Naive thymus-derived CD4-positive, alpha-beta T cell (primary cell): ENCODE measurements at regions of chr7 and their contacts with region 1.

Region 1: GRCh38 chr7:142478479-142479072 is 220.7 kb upstream of the PRSS58 start:
- DNase-seq: peak in 2 of 9 donors; percentile 27 to 32
- ATAC-seq: peak; percentile 62
- H3K4me3 ChIP-seq: no peak overlapping the region
- H3K4me3 Mint-ChIP-seq: peak overlapping the region in 9 of 10 donors; percentile 22 to 84 (median 71)
- H3K27ac ChIP-seq: peak overlapping the region; percentile 62
- H3K27ac Mint-ChIP-seq: peak overlapping the region; percentile 43 to 96 (median 90)
- H3K4me1 ChIP-seq: peaks cover 13 to 76% of the 10 kb centered on the region in 2 donors
- H3K4me1 Mint-ChIP-seq: peaks cover 48 to 94% (median 85%) of the 10 kb centered on the region in 7 donors
- H3K27me3 ChIP-seq: no peaks in the 10 kb centered on the region
- H3K27me3 Mint-ChIP-seq: no peaks in the 10 kb centered on the region

Region 2: DNA sequence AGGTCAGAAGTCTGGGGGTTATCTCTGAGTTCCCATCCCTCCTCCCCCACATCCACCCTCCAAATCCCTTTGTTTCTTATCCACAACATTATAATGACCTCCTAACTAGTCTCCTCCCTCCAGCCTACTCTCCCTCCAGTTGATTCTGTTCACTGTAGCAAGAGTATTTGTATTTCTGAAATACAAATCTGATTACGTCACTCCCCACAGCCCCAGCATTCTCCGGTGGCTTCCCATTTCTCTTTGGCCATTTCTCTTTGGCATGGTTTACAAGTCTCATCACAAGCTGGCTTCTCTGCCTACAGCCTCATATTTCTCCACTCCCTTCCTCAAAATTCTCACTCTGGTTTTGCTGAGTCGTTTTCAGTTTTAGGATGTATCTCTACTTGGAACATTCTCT is 1439.2 kb before region 1 on chr7:
- CTCF ChIA-PET with region 1: no interaction called
- POLR2A ChIA-PET with region 1: no interaction called
- intact Hi-C with region 1: no loop called
- DNase-seq: no peak
- ATAC-seq: no peak
- H3K4me3 ChIP-seq: no peak overlapping the region
- H3K4me3 Mint-ChIP-seq: no peak overlapping the region
- H3K27ac ChIP-seq: no peak overlapping the region
- H3K27ac Mint-ChIP-seq: no peak overlapping the region
- H3K4me1 ChIP-seq: no peaks in the 10 kb centered on the region
- H3K4me1 Mint-ChIP-seq: no peaks in the 10 kb centered on the region
- H3K27me3 ChIP-seq: peaks cover 0 to 2% of the 10 kb centered on the region in 2 donors
- H3K27me3 Mint-ChIP-seq: peaks cover 12 to 29% (median 18%) of the 10 kb centered on the region in 5 donors

Region 3: GRCh38 chr7:141975806-141976523 is 502.6 kb before region 1 on chr7:
- CTCF ChIA-PET with region 1: no interaction called
- POLR2A ChIA-PET with region 1: no interaction called
- intact Hi-C with region 1: loop called in 1 of 2 experiments (anchors 10 kb)
- DNase-seq: peak; percentile 31 to 72 (median 59)
- ATAC-seq: peak; percentile 84
- H3K4me3 ChIP-seq: peak overlapping the region; percentile 73
- H3K4me3 Mint-ChIP-seq: peak overlapping the region; percentile 57 to 88 (median 82)
- H3K27ac ChIP-seq: no peak overlapping the region
- H3K27ac Mint-ChIP-seq: peak overlapping the region in 8 of 9 donors; percentile 38 to 91 (median 76)
- H3K4me1 ChIP-seq: peaks cover 0 to 12% of the 10 kb centered on the region in 2 donors
- H3K4me1 Mint-ChIP-seq: peaks cover 6 to 29% (median 13%) of the 10 kb centered on the region in 7 donors
- H3K27me3 ChIP-seq: no peaks in the 10 kb centered on the region
- H3K27me3 Mint-ChIP-seq: no peaks in the 10 kb centered on the region

Region 4: GRCh38 chr7:142385491-142386340 is 92.9 kb before region 1 on chr7:
- CTCF ChIA-PET with region 1: interaction called, 7 read pairs
- POLR2A ChIA-PET with region 1: no interaction called
- intact Hi-C with region 1: loop called in 1 of 2 experiments (anchors 1 kb)
- DNase-seq: peak in 5 of 9 donors; percentile 31 to 45 (median 39)
- ATAC-seq: peak; percentile 80
- H3K4me3 ChIP-seq: no peak overlapping the region
- H3K4me3 Mint-ChIP-seq: peak overlapping the region in 8 of 10 donors; percentile 1 to 75 (median 26)
- H3K27ac ChIP-seq: no peak overlapping the region
- H3K27ac Mint-ChIP-seq: peak overlapping the region in 3 of 9 donors; percentile 61 to 67 (median 63)
- H3K4me1 ChIP-seq: peaks cover 0 to 16% of the 10 kb centered on the region in 2 donors
- H3K4me1 Mint-ChIP-seq: peaks cover 22 to 38% (median 29%) of the 10 kb centered on the region in 7 donors
- H3K27me3 ChIP-seq: no peaks in the 10 kb centered on the region
- H3K27me3 Mint-ChIP-seq: no peaks in the 10 kb centered on the region

Region 5: DNA sequence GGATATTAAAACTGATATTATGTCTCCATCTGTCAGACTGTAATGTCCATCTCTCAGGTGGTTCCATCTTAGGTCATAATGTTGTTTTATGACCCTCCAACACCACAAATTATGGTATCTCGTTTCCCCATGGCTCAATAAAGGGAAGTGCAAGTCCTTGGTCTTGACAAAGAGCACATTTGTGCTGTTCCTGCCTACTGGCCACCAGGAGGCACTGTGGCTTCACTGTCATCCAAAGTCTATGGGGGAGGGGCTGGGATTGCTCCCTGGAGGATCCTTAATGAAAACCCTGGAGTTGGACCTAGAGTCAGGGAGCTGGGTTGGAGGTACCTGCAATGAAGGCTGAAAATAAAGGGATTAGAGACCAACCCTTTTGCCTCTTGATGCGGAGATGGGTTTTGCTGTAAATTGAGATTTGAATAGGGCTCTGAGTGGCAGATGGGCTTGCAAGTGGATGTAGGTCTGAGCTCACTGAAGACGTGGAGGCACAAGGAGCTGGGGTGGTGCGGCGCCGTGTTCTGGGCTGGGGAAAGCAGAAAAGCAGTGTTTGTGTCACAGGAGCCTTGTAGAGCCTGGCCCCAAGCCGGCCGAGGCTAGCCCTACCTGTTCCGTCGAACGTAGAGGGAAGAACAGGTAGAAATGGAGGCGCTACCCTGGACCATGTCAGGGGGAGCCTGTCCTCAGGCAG is 40.2 kb before region 1 on chr7:
- CTCF ChIA-PET with region 1: interaction called, 6 read pairs
- POLR2A ChIA-PET with region 1: no interaction called
- intact Hi-C with region 1: loop called (anchors 1 to 5 kb)
- DNase-seq: peak in 4 of 9 donors; percentile 25 to 37 (median 31)
- ATAC-seq: peak; percentile 71
- H3K4me3 ChIP-seq: no peak overlapping the region
- H3K4me3 Mint-ChIP-seq: peak overlapping the region in 2 of 10 donors; percentile 0 to 4
- H3K27ac ChIP-seq: no peak overlapping the region
- H3K27ac Mint-ChIP-seq: peak overlapping the region in 2 of 9 donors; percentile 8 to 11
- H3K4me1 ChIP-seq: peaks cover 6 to 26% of the 10 kb centered on the region in 2 donors
- H3K4me1 Mint-ChIP-seq: peaks cover 39 to 70% (median 66%) of the 10 kb centered on the region in 7 donors
- H3K27me3 ChIP-seq: no peaks in the 10 kb centered on the region
- H3K27me3 Mint-ChIP-seq: no peaks in the 10 kb centered on the region

Region 6: GRCh38 chr7:142496545-142497041 is 18.0 kb after region 1 on chr7:
- CTCF ChIA-PET with region 1: interaction called, 22 read pairs
- POLR2A ChIA-PET with region 1: interaction called, 8 read pairs
- intact Hi-C with region 1: loop called in 1 of 2 experiments (anchors 1 kb)
- DNase-seq: peak in 7 of 9 donors; percentile 39 to 58 (median 45)
- ATAC-seq: peak; percentile 71
- H3K4me3 ChIP-seq: peak overlapping the region; percentile 30
- H3K4me3 Mint-ChIP-seq: peak overlapping the region; percentile 41 to 85 (median 70)
- H3K27ac ChIP-seq: peak overlapping the region; percentile 64
- H3K27ac Mint-ChIP-seq: peak overlapping the region; percentile 33 to 93 (median 77)
- H3K4me1 ChIP-seq: peaks cover 5 to 46% of the 10 kb centered on the region in 2 donors
- H3K4me1 Mint-ChIP-seq: peaks cover 15 to 72% (median 65%) of the 10 kb centered on the region in 7 donors
- H3K27me3 ChIP-seq: no peaks in the 10 kb centered on the region
- H3K27me3 Mint-ChIP-seq: peaks cover 0 to 9% (median 0%) of the 10 kb centered on the region in 5 donors